ENCODE measurements at regions of chr1 and their contacts with region 1.

Region 1: GRCh38 chr1:17419626-17420328 is 19.7 kb downstream of the RCC2 start:
- DNase-seq: no peak
- ATAC-seq: peak; percentile 91
- H3K4me3 ChIP-seq: no peak overlapping the region
- H3K27ac ChIP-seq: no peak overlapping the region
- H3K4me1 ChIP-seq: peaks cover 4% of the 10 kb centered on the region; the same call in 1 of the 2 replicates
- H3K27me3 ChIP-seq: no peaks in the 10 kb centered on the region
- CTCF ChIP-seq: peak; percentile 100

Region 2: GRCh38 chr1:17381161-17381560 is 38.6 kb before region 1 on chr1:
- CTCF ChIA-PET with region 1: no interaction called
- POLR2A ChIA-PET with region 1: no interaction called
- in situ Hi-C with region 1: no loop called
- intact Hi-C with region 1: no loop called
- DNase-seq: no peak
- ATAC-seq: no peak
- H3K4me3 ChIP-seq: no peak overlapping the region
- H3K27ac ChIP-seq: no peak overlapping the region
- H3K4me1 ChIP-seq: no peaks in the 10 kb centered on the region
- H3K27me3 ChIP-seq: no peaks in the 10 kb centered on the region
- CTCF ChIP-seq: no peak

Region 3: DNA sequence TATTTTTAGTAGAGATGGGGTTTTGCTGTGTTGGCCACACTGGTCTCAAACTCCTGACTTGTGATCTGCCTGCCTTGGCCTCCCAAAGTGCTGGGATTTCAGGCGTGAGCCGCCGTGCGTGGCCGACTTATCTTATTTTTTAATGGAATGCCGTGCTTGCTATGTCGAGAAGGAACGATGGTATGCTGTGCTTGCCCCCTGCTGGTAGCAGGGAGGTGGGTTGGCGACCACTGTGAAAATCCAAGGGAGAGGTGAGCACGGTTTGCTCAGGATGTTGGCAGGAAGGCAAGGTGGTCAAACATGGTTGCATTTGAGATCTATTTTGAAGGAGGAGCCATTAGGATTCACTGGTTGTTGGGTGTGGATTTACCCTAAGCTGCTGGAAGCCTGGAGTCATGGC is 65.5 kb after region 1 on chr1:
- CTCF ChIA-PET with region 1: no interaction called
- POLR2A ChIA-PET with region 1: no interaction called
- in situ Hi-C with region 1: no loop called
- intact Hi-C with region 1: loop called (anchors 2 kb)
- DNase-seq: no peak
- ATAC-seq: peak; percentile 55; the same call in 1 of the 2 replicates
- H3K4me3 ChIP-seq: no peak overlapping the region
- H3K27ac ChIP-seq: no peak overlapping the region
- H3K4me1 ChIP-seq: no peaks in the 10 kb centered on the region
- H3K27me3 ChIP-seq: no peaks in the 10 kb centered on the region
- CTCF ChIP-seq: peak; percentile 77

Measured in Panc1 (cell line).